ENCODE measurements at regions of chr21 and their contacts with region 1.

Region 1: DNA sequence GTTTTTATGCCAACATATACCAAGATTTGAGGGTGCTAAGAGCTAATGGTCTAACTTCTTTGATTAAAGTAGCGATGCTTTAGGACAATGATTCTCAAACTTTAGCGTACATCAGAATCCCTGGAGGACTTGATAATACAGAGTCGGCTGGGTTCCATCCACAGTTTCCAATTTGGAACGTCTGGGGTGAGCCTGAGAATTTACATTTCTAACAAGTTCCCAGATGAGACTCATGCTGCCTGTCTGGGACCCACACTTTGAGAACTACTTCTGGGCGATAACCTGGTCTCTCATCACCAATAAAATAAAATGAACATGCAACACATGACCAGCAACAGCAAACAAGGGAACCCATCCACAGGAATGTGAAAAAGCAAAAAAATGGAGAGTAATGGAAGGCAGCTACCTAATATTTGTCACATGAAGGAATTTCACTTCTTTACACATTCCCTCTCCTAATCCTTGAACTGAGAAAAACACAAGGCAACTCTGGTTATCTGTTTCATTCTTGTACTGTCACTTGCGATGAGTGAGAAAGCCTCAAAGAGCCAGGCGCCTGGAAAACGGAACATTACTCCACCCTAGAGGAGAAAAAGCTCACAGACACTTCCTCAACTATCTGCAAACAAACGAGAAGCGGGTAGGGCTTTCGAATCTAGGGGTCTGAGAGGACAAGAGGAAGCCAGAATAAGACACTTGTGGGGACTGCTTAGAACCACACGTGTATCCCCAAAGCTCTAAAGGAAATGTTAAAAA is 14.0 kb downstream of the HSF2BP start:
- DNase-seq: peak; percentile 84
- H3K4me3 ChIP-seq: no peak overlapping the region
- H3K27ac ChIP-seq: peak overlapping the region; percentile 50
- H3K4me1 ChIP-seq: peaks cover 14% of the 10 kb centered on the region
- H3K27me3 ChIP-seq: no peaks in the 10 kb centered on the region
- CTCF ChIP-seq: peak; percentile 49 to 54
- POLR2A ChIP-seq: no peak

Region 2: GRCh38 chr21:43211072-43211759 is 434.1 kb before region 1 on chr21:
- CTCF ChIA-PET with region 1: interaction called, 20 read pairs
- POLR2A ChIA-PET with region 1: no interaction called
- dilution Hi-C with region 1: no loop called
- intact Hi-C with region 1: no loop called
- DNase-seq: peak; percentile 56
- H3K4me3 ChIP-seq: no peak overlapping the region
- H3K27ac ChIP-seq: no peak overlapping the region
- H3K4me1 ChIP-seq: no peaks in the 10 kb centered on the region
- H3K27me3 ChIP-seq: no peaks in the 10 kb centered on the region
- CTCF ChIP-seq: peak; percentile 35 to 69
- POLR2A ChIP-seq: no peak

Region 3: GRCh38 chr21:43585924-43586424 is 59.3 kb before region 1 on chr21:
- CTCF ChIA-PET with region 1: interaction called, 5 read pairs
- POLR2A ChIA-PET with region 1: no interaction called
- dilution Hi-C with region 1: no loop called
- intact Hi-C with region 1: loop called (anchors 2 kb)
- DNase-seq: peak; percentile 99
- H3K4me3 ChIP-seq: no peak overlapping the region
- H3K27ac ChIP-seq: peak overlapping the region; percentile 100
- H3K4me1 ChIP-seq: peaks cover 27% of the 10 kb centered on the region
- H3K27me3 ChIP-seq: no peaks in the 10 kb centered on the region
- CTCF ChIP-seq: no peak
- POLR2A ChIP-seq: peak; percentile 27

Region 4: GRCh38 chr21:43611598-43612369 is 33.5 kb before region 1 on chr21:
- CTCF ChIA-PET with region 1: interaction called, 21 read pairs
- POLR2A ChIA-PET with region 1: no interaction called
- dilution Hi-C with region 1: no loop called
- intact Hi-C with region 1: loop called (anchors 1 kb)
- DNase-seq: peak; percentile 80
- H3K4me3 ChIP-seq: no peak overlapping the region
- H3K27ac ChIP-seq: peak overlapping the region; percentile 53
- H3K4me1 ChIP-seq: peaks cover 8% of the 10 kb centered on the region
- H3K27me3 ChIP-seq: no peaks in the 10 kb centered on the region
- CTCF ChIP-seq: peak; percentile 77 to 90
- POLR2A ChIP-seq: no peak

Region 5: DNA sequence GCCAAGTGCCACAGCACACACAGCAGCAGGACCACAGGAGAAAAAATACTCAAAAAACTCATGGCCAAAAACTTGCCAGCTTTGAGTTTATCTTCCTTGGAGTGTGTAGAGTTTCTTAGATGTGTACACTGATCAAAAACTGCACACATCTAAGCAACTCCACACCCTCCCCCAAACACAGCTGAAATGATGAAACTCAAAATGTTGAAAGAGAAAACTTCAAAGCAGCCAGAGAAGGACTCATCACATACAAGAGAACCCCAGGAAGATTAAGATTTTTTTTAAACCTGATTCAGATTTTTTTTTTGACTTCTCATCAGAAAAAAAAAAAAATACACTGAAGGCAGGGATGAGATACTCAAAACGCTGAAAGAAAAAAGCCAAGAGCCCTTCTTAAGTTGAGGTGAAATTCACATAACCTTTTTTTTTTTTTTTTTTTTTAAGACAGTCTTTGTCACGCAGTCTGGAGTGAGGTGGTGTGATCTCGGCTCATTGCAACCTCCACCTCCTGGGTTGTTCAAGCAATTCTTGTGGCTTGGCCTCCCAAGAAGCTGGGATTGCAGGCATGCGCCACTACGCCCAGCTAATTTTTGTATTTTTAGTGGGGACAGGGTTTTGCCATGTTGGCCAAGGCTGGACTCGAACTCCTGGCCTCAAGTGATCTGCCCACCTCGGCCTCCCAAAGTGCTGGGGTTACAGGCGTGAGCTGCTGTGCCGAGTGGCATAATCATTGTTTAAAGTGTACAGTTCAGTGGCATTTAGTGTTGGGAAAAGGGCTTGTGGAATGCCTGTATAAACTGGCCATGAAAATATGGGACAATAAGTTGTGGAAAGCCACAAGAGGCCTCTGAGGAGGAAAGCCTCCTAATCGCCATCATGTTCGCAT is 52.7 kb after region 1 on chr21:
- CTCF ChIA-PET with region 1: no interaction called
- POLR2A ChIA-PET with region 1: no interaction called
- dilution Hi-C with region 1: no loop called
- intact Hi-C with region 1: no loop called
- DNase-seq: no peak
- H3K4me3 ChIP-seq: no peak overlapping the region
- H3K27ac ChIP-seq: no peak overlapping the region
- H3K4me1 ChIP-seq: no peaks in the 10 kb centered on the region
- H3K27me3 ChIP-seq: no peaks in the 10 kb centered on the region
- CTCF ChIP-seq: no peak
- POLR2A ChIP-seq: no peak